ENCODE measurements at regions of chr20 and their contacts with region 1.

Region 1: DNA sequence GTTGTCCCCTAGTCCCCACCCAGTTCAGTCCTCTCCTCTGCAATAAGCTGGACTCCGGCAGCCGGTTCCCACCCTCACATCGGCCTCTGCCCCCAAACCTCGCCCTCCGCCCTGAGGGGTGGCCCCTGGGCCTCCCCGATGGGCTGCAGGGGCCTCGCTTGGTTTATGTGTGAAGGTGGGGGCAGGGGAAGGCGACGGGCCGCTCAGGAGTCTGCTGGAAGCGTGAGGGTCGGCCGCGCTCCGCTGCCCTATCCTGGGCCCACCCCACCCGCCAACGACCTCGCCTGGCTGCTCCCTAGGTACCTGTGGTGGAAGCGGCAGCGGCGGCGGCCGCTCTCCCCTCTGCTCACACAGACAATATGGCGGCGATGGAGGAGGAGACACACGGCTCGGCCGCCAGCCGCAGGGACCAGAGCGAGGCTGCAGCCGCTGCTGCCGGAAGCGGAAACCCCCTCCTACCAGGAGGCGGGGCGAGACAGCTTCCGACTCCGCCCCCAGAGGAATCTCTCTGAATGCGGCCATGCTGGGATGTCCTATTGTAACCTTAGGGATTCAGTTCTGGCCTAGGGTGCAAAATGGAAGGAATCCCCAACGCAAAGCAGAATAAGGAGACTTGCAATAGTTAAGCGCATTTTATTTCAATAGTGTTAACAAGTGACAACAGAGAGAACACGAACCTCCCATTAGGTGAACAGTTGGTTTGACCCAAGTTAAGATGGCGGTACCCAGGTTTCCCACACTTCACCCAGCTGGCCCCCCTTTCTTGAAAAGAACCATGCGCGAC is at the start of gene CSNK2A1:
- DNase-seq: peak; percentile 97
- H3K4me3 Mint-ChIP-seq: peak within 1 kb of the TSS; percentile 85
- H3K27ac Mint-ChIP-seq: peak within 1 kb of the TSS; percentile 96
- H3K4me1 Mint-ChIP-seq: peaks cover 48% of the 10 kb centered on the region
- H3K27me3 Mint-ChIP-seq: peaks cover 4% of the 10 kb centered on the region
- total RNA-seq, gene CSNK2A1: 154 to 155 TPM

Region 2: DNA sequence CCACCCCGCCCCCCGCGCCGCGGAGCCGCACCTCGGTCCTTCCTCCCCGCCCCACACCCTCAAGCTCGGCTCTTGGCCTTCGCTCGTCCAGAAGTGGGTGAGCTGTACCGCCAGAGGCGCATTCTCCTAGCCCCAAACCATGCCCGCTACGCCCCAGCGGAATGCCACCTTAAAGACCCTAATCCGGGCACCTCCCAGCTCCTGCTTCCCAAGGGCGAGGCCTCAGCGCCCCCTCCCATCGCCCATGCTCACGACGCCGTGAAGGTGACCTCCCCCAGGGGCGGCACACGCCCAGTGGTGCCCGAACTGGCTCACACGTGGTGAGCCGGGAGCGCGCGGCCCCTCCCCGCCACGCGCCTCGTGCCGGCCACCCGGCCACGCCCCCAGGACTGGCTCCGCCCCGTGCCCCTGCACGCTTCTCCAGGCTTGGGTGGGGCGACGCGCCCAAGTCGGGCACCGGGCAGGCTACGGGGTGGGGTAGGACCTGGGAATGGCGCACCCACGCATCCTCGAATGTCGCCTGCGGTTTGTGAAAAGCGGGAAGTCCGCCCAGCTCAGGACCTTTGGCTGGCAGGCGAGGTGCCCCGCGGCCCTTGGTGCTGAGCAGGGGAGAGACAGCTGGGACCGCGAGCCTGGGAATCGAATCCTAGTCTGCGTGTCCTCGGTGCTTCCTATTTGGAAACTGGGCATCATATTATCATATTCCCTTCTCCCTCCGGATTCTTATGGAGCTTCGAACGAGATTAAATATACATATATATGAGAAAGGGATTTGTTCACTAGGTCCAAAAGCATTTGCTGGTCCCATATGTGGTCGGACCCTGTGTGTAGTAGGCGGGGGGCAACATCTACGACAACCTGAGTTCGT is 219.2 kb before region 1 on chr20:
- CTCF ChIA-PET with region 1: no interaction called
- POLR2A ChIA-PET with region 1: no interaction called
- intact Hi-C with region 1: loop called (anchors 1 kb)
- DNase-seq: peak; percentile 89
- H3K4me3 Mint-ChIP-seq: peak overlapping the region; percentile 82
- H3K27ac Mint-ChIP-seq: peak overlapping the region; percentile 78
- H3K4me1 Mint-ChIP-seq: peaks cover 14% of the 10 kb centered on the region
- H3K27me3 Mint-ChIP-seq: no peaks in the 10 kb centered on the region

Region 3: DNA sequence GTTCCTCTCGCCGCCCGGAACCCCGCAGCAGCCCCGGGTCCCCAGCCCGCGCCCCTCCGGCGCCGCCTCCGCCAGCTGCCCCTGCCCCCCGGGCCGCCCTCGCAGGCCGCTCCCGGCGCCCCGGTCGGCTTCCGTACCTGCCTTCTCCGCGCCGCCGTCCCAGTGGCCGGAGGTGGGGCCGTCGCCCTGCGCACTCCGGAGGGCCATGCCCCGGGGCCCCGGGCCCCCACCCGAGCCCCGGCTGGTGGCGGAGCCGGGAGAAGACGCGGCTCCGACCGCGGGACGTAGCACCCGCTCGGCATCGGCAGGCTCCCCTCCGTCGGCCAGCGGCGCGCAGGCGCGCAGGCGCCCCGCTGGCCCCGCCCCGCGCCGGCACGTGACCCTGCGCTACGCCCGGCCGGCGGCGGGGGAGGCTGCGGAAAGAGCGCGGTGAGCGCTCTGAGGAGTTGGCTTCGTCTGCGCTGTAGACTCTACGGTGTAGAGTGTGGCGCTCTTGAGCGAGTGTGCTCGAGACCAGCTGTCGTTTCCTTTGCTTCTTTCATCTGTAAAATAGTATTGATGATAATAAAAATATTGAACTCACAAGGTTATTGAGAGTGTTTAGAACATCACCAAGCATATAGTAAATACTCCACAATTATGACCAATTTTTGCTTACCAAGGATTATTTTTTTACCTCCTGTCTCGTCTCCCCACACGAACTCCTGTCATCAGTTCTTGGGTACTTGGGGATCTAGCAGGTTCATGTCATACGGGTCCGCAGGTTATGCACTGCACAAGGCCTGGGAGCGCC is 81.2 kb before region 1 on chr20 and contains the start of gene TBC1D20:
- CTCF ChIA-PET with region 1: no interaction called
- POLR2A ChIA-PET with region 1: no interaction called
- intact Hi-C with region 1: loop called (anchors 2 kb)
- DNase-seq: peak; percentile 88
- H3K4me3 Mint-ChIP-seq: peak within 1 kb of the TSS; percentile 86
- H3K27ac Mint-ChIP-seq: peak within 1 kb of the TSS; percentile 84
- H3K4me1 Mint-ChIP-seq: peaks cover 38% of the 10 kb centered on the region
- H3K27me3 Mint-ChIP-seq: no peaks in the 10 kb centered on the region
- total RNA-seq, gene TBC1D20: 18.8 to 20.4 TPM

Region 4: GRCh38 chr20:653110-653589 is 109.6 kb after region 1 on chr20 and contains the start of gene SRXN1:
- CTCF ChIA-PET with region 1: interaction called, 3 read pairs
- POLR2A ChIA-PET with region 1: interaction called, 5 read pairs
- intact Hi-C with region 1: loop called (anchors 5 kb)
- DNase-seq: peak; percentile 90
- H3K4me3 Mint-ChIP-seq: peak within 1 kb of the TSS; percentile 81
- H3K27ac Mint-ChIP-seq: peak within 1 kb of the TSS; percentile 70
- H3K4me1 Mint-ChIP-seq: peaks cover 26% of the 10 kb centered on the region
- H3K27me3 Mint-ChIP-seq: peaks cover 3% of the 10 kb centered on the region
- total RNA-seq, gene SRXN1: 13.3 to 14.1 TPM

Measured in activated CD4-positive, alpha-beta memory T cell treated with anti-CD3 and anti-CD28 coated beads for 36 hours (primary cell).